ENCODE measurements at regions of chr15 and their contacts with region 1.

Region 1: GRCh38 chr15:79431636-79432344 is at the start of gene MINAR1:
- DNase-seq: no peak
- H3K4me3 ChIP-seq: peak within 1 kb of the TSS; percentile 64
- CTCF ChIP-seq: peak; percentile 26

Region 2: DNA sequence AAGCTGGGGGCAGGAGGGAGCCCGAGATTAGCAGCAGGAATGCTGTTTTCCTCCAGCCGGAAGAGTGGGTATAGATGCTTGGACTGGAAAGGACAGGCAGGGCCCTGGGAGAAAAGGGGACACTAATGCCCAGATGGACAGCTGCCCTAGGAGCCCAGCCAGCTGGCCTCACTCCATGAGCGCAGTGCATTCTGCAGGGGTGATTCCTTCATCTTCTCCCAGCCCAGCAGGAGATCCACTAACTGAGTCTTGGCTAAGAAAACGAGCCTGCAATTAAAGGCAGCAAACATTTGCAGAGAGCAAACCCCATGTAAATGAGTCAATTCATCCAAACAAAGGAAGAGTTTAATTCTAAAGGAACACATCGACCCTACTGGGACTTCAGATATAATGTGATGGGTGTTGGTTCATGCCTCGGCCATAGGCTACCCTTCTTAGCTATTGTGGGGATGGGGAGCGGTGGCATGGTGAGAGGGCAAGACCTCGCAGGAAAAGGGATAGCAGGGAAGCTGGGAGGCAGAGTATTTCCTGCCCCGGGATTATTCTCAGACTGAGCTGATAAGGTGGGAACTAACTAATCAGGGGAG is 13.0 kb before region 1 on chr15:
- CTCF ChIA-PET with region 1: interaction called, 11 read pairs
- POLR2A ChIA-PET with region 1: no interaction called
- DNase-seq: no peak
- H3K4me3 ChIP-seq: no peak overlapping the region
- CTCF ChIP-seq: no peak

Region 3: DNA sequence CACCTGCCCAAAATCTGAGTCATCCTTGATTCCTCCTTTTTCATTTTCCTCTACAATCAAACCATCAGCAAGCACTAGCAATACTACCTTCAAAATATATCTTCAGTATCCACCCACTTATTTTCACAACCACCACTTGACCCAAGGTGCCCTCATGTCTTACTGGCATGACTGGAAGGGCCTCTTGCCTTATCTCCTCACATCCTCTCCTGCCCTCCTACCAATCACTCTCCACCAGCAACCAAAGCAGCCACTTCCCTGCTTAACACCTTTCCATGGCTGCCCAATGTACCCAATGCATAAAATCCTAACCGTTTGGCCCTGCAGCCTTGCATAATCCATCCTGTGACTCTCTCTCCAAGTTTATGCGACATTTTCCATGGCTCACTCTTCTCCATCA is 389.0 kb after region 1 on chr15:
- CTCF ChIA-PET with region 1: no interaction called
- POLR2A ChIA-PET with region 1: no interaction called
- DNase-seq: no peak
- H3K4me3 ChIP-seq: no peak overlapping the region
- CTCF ChIP-seq: no peak